ENCODE measurements at regions of chr15 and their contacts with region 1.

Region 1: GRCh38 chr15:68277603-68278344 is at the start of gene FEM1B:
- DNase-seq: peak; percentile 79 to 97 (median 86)
- ATAC-seq: peak; percentile 80 to 82
- H3K4me3 Mint-ChIP-seq: peak within 1 kb of the TSS; percentile 85 to 99 (median 94)
- H3K27ac Mint-ChIP-seq: peak within 1 kb of the TSS; percentile 97 to 100 (median 98)
- H3K4me1 Mint-ChIP-seq: peaks cover 35 to 56% (median 54%) of the 10 kb centered on the region in 4 donors
- H3K27me3 Mint-ChIP-seq: peaks cover 0 to 2% (median 0%) of the 10 kb centered on the region in 5 donors
- polyA plus RNA-seq, gene FEM1B: 13.4 to 15.7 (median 14.6) TPM

Region 2: DNA sequence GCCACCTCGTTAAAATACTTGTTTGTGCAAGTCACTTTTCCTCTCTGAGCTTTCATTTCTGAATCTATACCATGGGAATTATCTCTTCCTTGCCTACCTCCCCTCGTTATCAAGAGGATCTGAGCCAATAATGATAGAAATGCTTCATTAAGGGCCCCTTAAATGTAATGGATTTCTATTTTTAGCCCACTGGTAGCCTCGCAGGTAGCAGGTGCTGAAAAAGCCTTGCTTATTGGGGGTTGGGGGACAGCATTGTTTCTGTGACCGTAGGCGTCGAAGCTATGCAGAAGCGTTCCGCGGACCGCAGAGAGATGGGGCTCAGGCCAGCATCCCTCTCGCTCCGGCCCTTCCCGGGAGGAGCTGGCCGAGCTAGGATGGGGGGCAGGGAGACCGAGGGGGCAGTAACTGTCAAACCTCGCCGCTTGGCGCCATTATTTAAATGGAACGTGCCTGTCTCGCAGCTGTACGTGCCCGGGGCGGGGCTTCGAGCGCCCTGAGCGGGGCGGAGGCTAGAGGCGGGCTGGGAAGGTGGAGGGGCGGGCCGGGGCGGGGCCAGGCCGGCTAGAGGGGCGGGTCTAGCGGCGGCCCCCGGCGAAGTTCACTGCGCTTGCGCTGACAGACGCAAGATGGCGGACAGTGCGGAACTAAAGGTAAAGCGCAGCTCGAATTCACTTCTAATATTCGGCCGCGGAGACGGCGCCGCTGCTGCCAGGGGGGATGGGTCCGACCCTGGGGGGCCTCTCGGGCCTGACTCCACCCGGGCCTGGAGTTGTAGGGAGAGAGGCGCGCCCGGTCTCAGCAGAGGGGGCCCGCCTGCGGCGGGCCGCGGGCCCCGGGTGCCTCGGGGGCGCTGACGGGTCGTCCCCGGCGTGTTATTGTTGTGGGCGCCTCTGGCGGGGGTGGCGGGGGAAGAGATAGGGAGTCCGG is 223.8 kb before region 1 on chr15 and contains the start of gene PIAS1:
- POLR2A ChIA-PET with region 1: interaction called, 22 read pairs
- DNase-seq: peak; percentile 85 to 97 (median 92)
- ATAC-seq: peak; percentile 85 to 88
- H3K4me3 Mint-ChIP-seq: peak within 1 kb of the TSS; percentile 88 to 99 (median 95)
- H3K27ac Mint-ChIP-seq: peak within 1 kb of the TSS; percentile 85 to 98 (median 96)
- H3K4me1 Mint-ChIP-seq: peaks cover 14 to 44% (median 39%) of the 10 kb centered on the region in 4 donors
- H3K27me3 Mint-ChIP-seq: peaks cover 0 to 9% (median 2%) of the 10 kb centered on the region in 5 donors
- polyA plus RNA-seq, gene PIAS1: 120 to 149 (median 138) TPM

Region 3: GRCh38 chr15:68229386-68230156 is 48.2 kb before region 1 on chr15 and contains the start of gene CLN6:
- POLR2A ChIA-PET with region 1: interaction called, 30 read pairs
- DNase-seq: peak; percentile 71 to 88 (median 80)
- ATAC-seq: peak; percentile 82 to 85
- H3K4me3 Mint-ChIP-seq: peak within 1 kb of the TSS; percentile 83 to 97 (median 96)
- H3K27ac Mint-ChIP-seq: peak within 1 kb of the TSS; percentile 86 to 99 (median 94)
- H3K4me1 Mint-ChIP-seq: peaks cover 18 to 47% (median 37%) of the 10 kb centered on the region in 4 donors
- H3K27me3 Mint-ChIP-seq: peaks cover 0 to 10% (median 0%) of the 10 kb centered on the region in 5 donors
- polyA plus RNA-seq, gene CLN6: 2.4 to 4.1 (median 3.3) TPM

Region 4: GRCh38 chr15:68252925-68253534 is 24.7 kb before region 1 on chr15:
- POLR2A ChIA-PET with region 1: interaction called, 77 read pairs
- DNase-seq: peak in 7 of 10 donors; percentile 38 to 73 (median 52)
- ATAC-seq: peak; percentile 57 to 76
- H3K4me3 Mint-ChIP-seq: no peak overlapping the region
- H3K27ac Mint-ChIP-seq: no peak overlapping the region
- H3K4me1 Mint-ChIP-seq: peaks cover 0 to 7% (median 3%) of the 10 kb centered on the region in 4 donors
- H3K27me3 Mint-ChIP-seq: peaks cover 0 to 7% (median 2%) of the 10 kb centered on the region in 5 donors

Region 5: DNA sequence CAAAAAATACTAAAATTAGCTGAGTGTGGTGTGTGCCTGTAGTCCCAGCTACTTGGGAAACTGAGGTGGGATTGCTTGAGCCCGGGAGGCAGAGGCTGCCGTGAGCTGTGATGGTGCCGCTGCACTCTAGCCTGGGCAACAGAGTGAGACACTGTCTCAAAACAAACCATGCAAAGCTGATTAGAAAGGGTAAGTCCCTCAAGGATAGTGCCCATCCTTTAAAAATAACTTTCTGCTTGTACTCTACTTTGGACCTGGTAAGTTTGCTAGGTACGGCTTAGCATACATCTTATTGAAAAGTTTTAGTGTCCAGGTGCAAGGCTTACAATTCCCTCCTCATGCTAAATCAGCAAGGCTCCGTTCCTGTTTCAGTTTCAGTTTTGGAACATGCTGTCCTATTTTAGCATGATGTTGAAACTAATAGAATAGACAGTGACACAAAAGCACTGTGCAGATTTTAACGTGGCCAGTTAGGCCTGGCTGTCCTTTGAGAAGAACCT is 21.2 kb after region 1 on chr15:
- POLR2A ChIA-PET with region 1: interaction called, 27 read pairs
- DNase-seq: peak in 5 of 10 donors; percentile 17 to 49 (median 35)
- ATAC-seq: peak; percentile 84 to 86
- H3K4me3 Mint-ChIP-seq: peak overlapping the region; percentile 74 to 88 (median 83)
- H3K27ac Mint-ChIP-seq: peak overlapping the region; percentile 77 to 95 (median 92)
- H3K4me1 Mint-ChIP-seq: peaks cover 13 to 47% (median 43%) of the 10 kb centered on the region in 4 donors
- H3K27me3 Mint-ChIP-seq: no peaks in the 10 kb centered on the region

Region 6: GRCh38 chr15:68307131-68307928 is 29.6 kb after region 1 on chr15:
- POLR2A ChIA-PET with region 1: interaction called, 20 read pairs
- DNase-seq: no peak
- ATAC-seq: no peak
- H3K4me3 Mint-ChIP-seq: peak overlapping the region in 1 of 10 donors; percentile 54
- H3K27ac Mint-ChIP-seq: no peak overlapping the region
- H3K4me1 Mint-ChIP-seq: peaks cover 6 to 12% (median 8%) of the 10 kb centered on the region in 4 donors
- H3K27me3 Mint-ChIP-seq: peaks cover 0 to 12% (median 3%) of the 10 kb centered on the region in 5 donors